ENCODE measurements at regions of chr17 and their contacts with region 1.

Region 1: GRCh38 chr17:50834429-50835300 is 721 bp upstream of the WFIKKN2 start:
- DNase-seq: no peak
- H3K4me3 ChIP-seq: no peak overlapping the region
- H3K27ac ChIP-seq: no peak overlapping the region
- H3K4me1 ChIP-seq: peaks cover 0 to 31% (median 26%) of the 10 kb centered on the region in 4 experiments; a peak in 6 of 7 replicates
- H3K27me3 ChIP-seq: no peaks in the 10 kb centered on the region
- CTCF ChIP-seq: no peak
- EP300 ChIP-seq: no peak
- POLR2A ChIP-seq: no peak
- RAD21 ChIP-seq: no peak

Region 2: GRCh38 chr17:50893183-50893993 is 58.7 kb after region 1 on chr17:
- CTCF ChIA-PET with region 1: no interaction called
- POLR2A ChIA-PET with region 1: no interaction called
- DNase-seq: no peak
- H3K4me3 ChIP-seq: no peak overlapping the region
- H3K27ac ChIP-seq: no peak overlapping the region
- H3K4me1 ChIP-seq: peaks cover 8 to 20% (median 15%) of the 10 kb centered on the region in 4 experiments
- H3K27me3 ChIP-seq: no peaks in the 10 kb centered on the region
- CTCF ChIP-seq: no peak
- EP300 ChIP-seq: no peak
- POLR2A ChIP-seq: no peak
- RAD21 ChIP-seq: no peak

Region 3: GRCh38 chr17:50956750-50957523 is 122.3 kb after region 1 on chr17:
- CTCF ChIA-PET with region 1: interaction called, 735 read pairs
- POLR2A ChIA-PET with region 1: no interaction called
- DNase-seq: peak in 1 of 2 experiments; percentile 81
- H3K4me3 ChIP-seq: no peak overlapping the region
- H3K27ac ChIP-seq: no peak overlapping the region
- H3K4me1 ChIP-seq: peaks cover 3 to 18% (median 10%) of the 10 kb centered on the region in 4 experiments
- H3K27me3 ChIP-seq: no peaks in the 10 kb centered on the region
- CTCF ChIP-seq: peak; percentile 81 to 96 (median 91)
- EP300 ChIP-seq: no peak
- POLR2A ChIP-seq: no peak
- RAD21 ChIP-seq: peak; percentile 85 to 89